Calu3 (cell line): ENCODE measurements at regions of chr1 and their contacts with region 1.

Region 1: DNA sequence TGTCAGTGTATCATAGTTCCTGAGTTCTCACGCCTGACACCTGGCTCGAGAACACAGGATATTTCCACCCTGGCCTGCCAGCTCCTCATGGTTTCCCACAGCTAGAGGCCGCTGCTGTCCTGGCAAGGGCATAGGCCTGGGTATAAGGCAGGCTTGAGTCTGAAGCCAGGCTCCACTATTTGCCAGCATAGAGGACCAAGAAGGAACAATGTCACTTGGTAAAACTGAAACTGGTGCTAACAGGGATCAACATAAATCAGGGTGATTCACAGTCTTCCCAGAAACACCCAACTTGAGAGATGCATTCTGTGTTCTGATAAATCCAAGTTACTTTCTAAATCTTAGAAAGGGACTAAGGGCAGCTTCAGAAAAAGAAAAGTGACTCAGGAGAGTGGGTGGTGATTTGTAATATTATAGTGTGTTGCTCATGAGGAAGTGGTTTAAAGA is 6.9 kb upstream of the S100A2 start:
- DNase-seq: peak; percentile 92
- H3K4me3 Mint-ChIP-seq: peak overlapping the region; percentile 28
- H3K27ac Mint-ChIP-seq: peak overlapping the region; percentile 73
- H3K4me1 Mint-ChIP-seq: peaks cover 64% of the 10 kb centered on the region
- H3K27me3 Mint-ChIP-seq: no peaks in the 10 kb centered on the region
- CTCF ChIP-seq: peak; percentile 79

Region 2: DNA sequence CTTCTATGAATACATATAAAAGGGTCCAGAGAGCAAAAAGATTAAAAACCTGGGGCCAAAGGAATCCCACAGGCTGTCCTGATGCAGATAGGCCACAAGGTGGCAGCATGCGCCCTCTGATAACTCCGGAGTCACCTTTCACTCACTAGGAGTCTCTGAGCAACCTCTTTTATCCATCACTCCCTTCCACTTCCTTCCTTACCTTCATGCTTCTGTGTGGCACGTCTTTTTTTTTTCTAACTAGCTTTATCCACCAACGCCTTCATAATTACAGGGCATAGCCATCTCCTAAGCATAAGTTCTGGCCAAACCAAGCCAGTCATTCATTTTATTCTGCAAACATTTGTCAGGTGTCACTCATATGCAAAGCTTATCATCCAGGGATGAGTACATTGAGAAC is 220.1 kb before region 1 on chr1:
- CTCF ChIA-PET with region 1: interaction called, 3 read pairs
- intact Hi-C with region 1: loop called (anchors 5 kb)
- DNase-seq: peak; percentile 73
- H3K4me3 Mint-ChIP-seq: no peak overlapping the region
- H3K27ac Mint-ChIP-seq: no peak overlapping the region
- H3K4me1 Mint-ChIP-seq: peaks cover 26% of the 10 kb centered on the region
- H3K27me3 Mint-ChIP-seq: peaks cover 65% of the 10 kb centered on the region
- CTCF ChIP-seq: peak; percentile 93

Region 3: GRCh38 chr1:153375511-153375910 is 197.1 kb before region 1 on chr1 and contains the start of gene S100A12:
- CTCF ChIA-PET with region 1: no interaction called
- intact Hi-C with region 1: no loop called
- DNase-seq: peak; percentile 43
- H3K4me3 Mint-ChIP-seq: no peak within 1 kb of the TSS
- H3K27ac Mint-ChIP-seq: no peak within 1 kb of the TSS
- H3K4me1 Mint-ChIP-seq: no peaks in the 10 kb centered on the region
- H3K27me3 Mint-ChIP-seq: peaks cover 57% of the 10 kb centered on the region
- CTCF ChIP-seq: no peak
- total RNA-seq, gene S100A12: not detected in 2 replicates

Region 4: GRCh38 chr1:153532769-153533599 is 39.6 kb before region 1 on chr1:
- CTCF ChIA-PET with region 1: interaction called, 117 read pairs
- intact Hi-C with region 1: loop called (anchors 1 kb)
- DNase-seq: peak; percentile 93
- H3K4me3 Mint-ChIP-seq: peak overlapping the region; percentile 93
- H3K27ac Mint-ChIP-seq: peak overlapping the region; percentile 77
- H3K4me1 Mint-ChIP-seq: peaks cover 47% of the 10 kb centered on the region
- H3K27me3 Mint-ChIP-seq: no peaks in the 10 kb centered on the region
- CTCF ChIP-seq: peak; percentile 88

Region 5: GRCh38 chr1:153561466-153561985 is 11.1 kb before region 1 on chr1:
- CTCF ChIA-PET with region 1: no interaction called
- intact Hi-C with region 1: no loop called
- DNase-seq: no peak
- H3K4me3 Mint-ChIP-seq: no peak overlapping the region
- H3K27ac Mint-ChIP-seq: no peak overlapping the region
- H3K4me1 Mint-ChIP-seq: peaks cover 16% of the 10 kb centered on the region
- H3K27me3 Mint-ChIP-seq: no peaks in the 10 kb centered on the region
- CTCF ChIP-seq: no peak

Region 6: DNA sequence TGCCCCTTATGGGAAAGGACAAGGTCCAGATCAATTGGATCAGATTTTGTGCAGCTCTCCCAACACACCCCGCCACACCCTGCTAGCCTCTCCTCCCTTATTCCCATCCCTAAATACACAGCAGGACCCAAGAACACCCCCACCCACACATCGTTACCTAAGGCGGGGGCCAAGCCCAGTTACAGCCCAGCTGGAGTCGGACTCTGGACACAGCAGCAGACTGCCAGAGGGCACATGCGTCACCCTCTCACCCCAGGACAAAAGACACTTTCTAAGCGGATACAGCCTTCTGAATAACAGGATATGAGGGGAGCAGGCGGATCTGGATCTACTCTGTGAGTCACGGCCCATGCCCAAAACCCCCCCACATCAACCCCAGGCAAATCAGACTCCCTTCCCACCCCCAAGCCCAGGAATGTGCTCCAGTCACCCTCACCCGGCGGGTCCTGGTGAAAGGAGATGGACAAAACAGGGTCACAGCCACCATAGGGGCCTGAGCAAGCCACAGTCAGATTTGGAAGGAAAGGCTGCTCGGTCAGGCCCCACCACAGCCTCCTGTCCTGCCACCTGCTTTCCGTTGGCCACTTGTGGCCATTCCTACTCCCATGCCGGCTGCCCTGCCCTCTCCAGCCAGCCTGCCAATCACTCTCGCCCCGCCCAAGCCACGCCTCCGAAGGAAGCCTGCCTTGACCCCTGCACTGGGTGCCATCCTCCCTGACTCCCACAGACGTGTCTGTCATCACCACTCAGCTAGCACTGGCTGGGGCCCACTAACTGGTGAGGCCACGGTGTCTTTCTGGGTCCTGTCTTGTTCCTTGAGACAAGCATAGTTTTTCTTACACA is 36.4 kb after region 1 on chr1:
- CTCF ChIA-PET with region 1: interaction called, 24 read pairs
- intact Hi-C with region 1: loop called (anchors 2 kb)
- DNase-seq: peak; percentile 91
- H3K4me3 Mint-ChIP-seq: peak overlapping the region; percentile 90
- H3K27ac Mint-ChIP-seq: peak overlapping the region; percentile 71
- H3K4me1 Mint-ChIP-seq: peaks cover 53% of the 10 kb centered on the region
- H3K27me3 Mint-ChIP-seq: no peaks in the 10 kb centered on the region
- CTCF ChIP-seq: no peak

Region 7: GRCh38 chr1:153626922-153627796 is 54.6 kb after region 1 on chr1 and contains the start of gene S100A13:
- CTCF ChIA-PET with region 1: interaction called, 44 read pairs
- intact Hi-C with region 1: loop called (anchors 1 kb)
- DNase-seq: peak; percentile 93
- H3K4me3 Mint-ChIP-seq: peak within 1 kb of the TSS; percentile 82
- H3K27ac Mint-ChIP-seq: peak within 1 kb of the TSS; percentile 81
- H3K4me1 Mint-ChIP-seq: peaks cover 39% of the 10 kb centered on the region
- H3K27me3 Mint-ChIP-seq: no peaks in the 10 kb centered on the region
- CTCF ChIP-seq: peak; percentile 90
- total RNA-seq, gene S100A13: 104 and 117 TPM in 2 replicates

Region 8: DNA sequence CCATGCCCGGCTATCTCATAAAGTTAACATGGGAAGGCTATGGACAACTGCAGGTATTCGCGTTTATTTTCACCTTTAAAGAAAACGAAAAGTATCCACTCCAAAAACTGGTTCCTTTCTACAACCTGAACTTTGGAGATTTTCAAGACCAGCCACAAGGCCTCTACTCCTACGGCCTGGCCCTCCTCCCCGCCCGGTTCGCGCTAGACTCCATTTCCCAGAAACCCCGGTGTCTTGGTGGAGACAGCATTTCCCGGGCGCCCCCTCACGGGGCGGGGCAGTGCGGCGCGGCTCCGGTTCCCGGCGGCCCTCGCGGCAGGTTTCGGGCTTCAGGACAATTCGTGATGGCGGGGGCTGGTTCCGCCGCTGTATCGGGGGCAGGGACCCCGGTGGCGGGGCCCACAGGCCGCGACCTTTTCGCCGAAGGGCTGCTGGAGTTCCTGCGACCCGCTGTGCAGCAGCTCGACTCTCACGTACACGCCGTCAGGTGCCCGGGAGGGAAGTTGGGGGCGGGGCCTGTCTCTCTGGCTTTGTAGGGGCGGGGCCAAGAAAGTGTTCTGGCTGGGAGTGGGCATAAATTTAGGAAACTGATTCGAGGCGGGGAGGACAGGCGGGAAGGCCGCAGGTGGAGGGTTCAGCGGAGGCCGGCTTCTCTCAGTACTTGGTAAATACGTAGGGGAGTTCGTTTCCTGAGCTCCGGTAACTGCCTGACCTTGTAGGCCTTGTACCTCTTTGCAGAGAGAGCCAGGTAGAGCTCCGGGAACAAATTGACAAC is 86.0 kb after region 1 on chr1 and contains the start of gene SNAPIN:
- CTCF ChIA-PET with region 1: no interaction called
- intact Hi-C with region 1: loop called (anchors 1 kb)
- DNase-seq: peak; percentile 97
- H3K4me3 Mint-ChIP-seq: peak within 1 kb of the TSS; percentile 96
- H3K27ac Mint-ChIP-seq: peak within 1 kb of the TSS; percentile 76
- H3K4me1 Mint-ChIP-seq: peaks cover 8% of the 10 kb centered on the region
- H3K27me3 Mint-ChIP-seq: no peaks in the 10 kb centered on the region
- CTCF ChIP-seq: peak; percentile 11
- total RNA-seq, gene SNAPIN: 45.0 and 46.8 TPM in 2 replicates

Region 9: GRCh38 chr1:153749408-153750005 is 176.9 kb after region 1 on chr1:
- CTCF ChIA-PET with region 1: no interaction called
- intact Hi-C with region 1: loop called (anchors 1 kb)
- DNase-seq: peak; percentile 85
- H3K4me3 Mint-ChIP-seq: no peak overlapping the region
- H3K27ac Mint-ChIP-seq: no peak overlapping the region
- H3K4me1 Mint-ChIP-seq: no peaks in the 10 kb centered on the region
- H3K27me3 Mint-ChIP-seq: no peaks in the 10 kb centered on the region
- CTCF ChIP-seq: peak; percentile 88

Region 10: GRCh38 chr1:153763365-153764225 is 191.0 kb after region 1 on chr1:
- CTCF ChIA-PET with region 1: no interaction called
- intact Hi-C with region 1: no loop called
- DNase-seq: no peak
- H3K4me3 Mint-ChIP-seq: no peak overlapping the region
- H3K27ac Mint-ChIP-seq: no peak overlapping the region
- H3K4me1 Mint-ChIP-seq: peaks cover 8% of the 10 kb centered on the region
- H3K27me3 Mint-ChIP-seq: no peaks in the 10 kb centered on the region
- CTCF ChIP-seq: no peak